OCI-LY7 (cell line): ENCODE measurements at regions of chr5 and their contacts with region 1.

Region 1: GRCh38 chr5:151799407-151799806 is 27.7 kb downstream of the G3BP1 start:
- DNase-seq: no peak
- H3K4me3 ChIP-seq: no peak overlapping the region
- H3K27ac ChIP-seq: no peak overlapping the region
- H3K4me1 ChIP-seq: no peaks in the 10 kb centered on the region
- CTCF ChIP-seq: no peak

Region 2: GRCh38 chr5:151612689-151613427 is 186.5 kb before region 1 on chr5:
- CTCF ChIA-PET with region 1: no interaction called
- POLR2A ChIA-PET with region 1: no interaction called
- intact Hi-C with region 1: no loop called
- DNase-seq: no peak
- H3K4me3 ChIP-seq: no peak overlapping the region
- H3K27ac ChIP-seq: no peak overlapping the region
- H3K4me1 ChIP-seq: no peaks in the 10 kb centered on the region
- CTCF ChIP-seq: no peak

Region 3: GRCh38 chr5:151811593-151812321 is 12.3 kb after region 1 on chr5:
- CTCF ChIA-PET with region 1: no interaction called
- POLR2A ChIA-PET with region 1: interaction called, 11 read pairs
- intact Hi-C with region 1: no loop called
- DNase-seq: no peak
- H3K4me3 ChIP-seq: no peak overlapping the region
- H3K27ac ChIP-seq: no peak overlapping the region
- H3K4me1 ChIP-seq: no peaks in the 10 kb centered on the region
- CTCF ChIP-seq: no peak

Region 4: GRCh38 chr5:152072091-152072490 is 272.7 kb after region 1 on chr5:
- CTCF ChIA-PET with region 1: no interaction called
- POLR2A ChIA-PET with region 1: no interaction called
- intact Hi-C with region 1: no loop called
- DNase-seq: no peak
- H3K4me3 ChIP-seq: no peak overlapping the region
- H3K27ac ChIP-seq: no peak overlapping the region
- H3K4me1 ChIP-seq: no peaks in the 10 kb centered on the region
- CTCF ChIP-seq: no peak

Region 5: GRCh38 chr5:152124409-152125041 is 325.1 kb after region 1 on chr5:
- CTCF ChIA-PET with region 1: no interaction called
- POLR2A ChIA-PET with region 1: no interaction called
- intact Hi-C with region 1: no loop called
- DNase-seq: no peak
- H3K4me3 ChIP-seq: no peak overlapping the region
- H3K27ac ChIP-seq: no peak overlapping the region
- H3K4me1 ChIP-seq: no peaks in the 10 kb centered on the region
- CTCF ChIP-seq: no peak